Head of caudate nucleus (tissue), 42 donors: ENCODE measurements at regions of chr5 and their contacts with region 1.

Region 1: GRCh38 chr5:52989781-52990527 is 802 bp downstream of the ITGA2 start:
- DNase-seq: peak; percentile 53 to 87 (median 72)

Region 2: DNA sequence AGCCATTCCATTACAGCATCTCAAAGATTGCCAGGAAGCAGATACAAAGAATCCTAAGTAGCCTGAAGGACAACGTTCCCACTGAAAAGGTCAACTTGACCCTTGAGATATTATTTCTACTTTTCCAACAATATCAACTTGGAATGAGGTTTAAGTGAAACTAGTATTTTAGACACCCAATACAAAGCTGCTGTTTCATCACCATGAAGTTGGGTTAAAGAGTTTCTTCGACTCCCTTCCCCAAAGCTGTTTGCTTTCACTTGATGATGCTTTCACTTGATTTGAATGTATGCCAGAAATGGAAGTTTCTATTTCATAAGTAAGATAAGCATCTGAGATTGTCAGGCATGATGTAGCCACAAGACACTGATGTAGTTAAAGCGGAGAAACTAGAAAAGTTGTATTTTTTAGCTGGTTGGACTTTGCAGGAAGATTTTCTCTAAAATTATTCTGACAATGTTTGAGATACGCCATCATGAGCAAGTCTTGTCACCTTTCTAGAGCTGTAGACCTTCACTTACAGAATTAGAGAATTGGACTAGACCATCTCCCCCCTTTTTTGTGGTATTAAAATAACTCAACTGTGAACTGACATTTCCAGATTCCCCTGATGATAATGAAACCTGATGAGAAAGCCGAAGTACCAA is 99.5 kb after region 1 on chr5:
- intact Hi-C with region 1: loop called (anchors 10 kb)
- DNase-seq: no peak

Region 3: GRCh38 chr5:53406630-53407316 is 416.8 kb after region 1 on chr5:
- intact Hi-C with region 1: no loop called
- DNase-seq: no peak